ENCODE measurements at regions of chr3 and their contacts with region 1.

Region 1: GRCh38 chr3:150763122-150763841 is at the start of gene SIAH2:
- DNase-seq: peak; percentile 97
- H3K4me3 Mint-ChIP-seq: peak within 1 kb of the TSS; percentile 88
- H3K27ac Mint-ChIP-seq: peak within 1 kb of the TSS; percentile 97
- H3K4me1 Mint-ChIP-seq: peaks cover 46% of the 10 kb centered on the region
- H3K27me3 Mint-ChIP-seq: no peaks in the 10 kb centered on the region
- CTCF ChIP-seq: no peak
- total RNA-seq, gene SIAH2: 30.6 and 33.6 TPM in 2 replicates

Region 2: GRCh38 chr3:150359381-150359780 is 403.9 kb before region 1 on chr3:
- CTCF ChIA-PET with region 1: no interaction called
- intact Hi-C with region 1: no loop called
- DNase-seq: no peak
- H3K4me3 Mint-ChIP-seq: no peak overlapping the region
- H3K27ac Mint-ChIP-seq: no peak overlapping the region
- H3K4me1 Mint-ChIP-seq: peaks cover 18% of the 10 kb centered on the region
- H3K27me3 Mint-ChIP-seq: no peaks in the 10 kb centered on the region
- CTCF ChIP-seq: no peak

Region 3: GRCh38 chr3:150546226-150547044 is 216.8 kb before region 1 on chr3 and contains the starts of genes EIF2A and SERP1:
- CTCF ChIA-PET with region 1: no interaction called
- intact Hi-C with region 1: loop called (anchors 5 kb)
- DNase-seq: peak; percentile 100
- H3K4me3 Mint-ChIP-seq: peak within 1 kb of the TSS; percentile 93
- H3K27ac Mint-ChIP-seq: peak within 1 kb of the TSS; percentile 98
- H3K4me1 Mint-ChIP-seq: peaks cover 51% of the 10 kb centered on the region
- H3K27me3 Mint-ChIP-seq: no peaks in the 10 kb centered on the region
- CTCF ChIP-seq: no peak
- total RNA-seq, gene EIF2A: 142 and 167 TPM in 2 replicates
- total RNA-seq, gene SERP1: 147 and 152 TPM in 2 replicates

Region 4: GRCh38 chr3:150567328-150567727 is 196.0 kb before region 1 on chr3:
- CTCF ChIA-PET with region 1: no interaction called
- intact Hi-C with region 1: no loop called
- DNase-seq: no peak
- H3K4me3 Mint-ChIP-seq: no peak overlapping the region
- H3K27ac Mint-ChIP-seq: peak overlapping the region; percentile 31
- H3K4me1 Mint-ChIP-seq: no peaks in the 10 kb centered on the region
- H3K27me3 Mint-ChIP-seq: no peaks in the 10 kb centered on the region
- CTCF ChIP-seq: no peak

Region 5: DNA sequence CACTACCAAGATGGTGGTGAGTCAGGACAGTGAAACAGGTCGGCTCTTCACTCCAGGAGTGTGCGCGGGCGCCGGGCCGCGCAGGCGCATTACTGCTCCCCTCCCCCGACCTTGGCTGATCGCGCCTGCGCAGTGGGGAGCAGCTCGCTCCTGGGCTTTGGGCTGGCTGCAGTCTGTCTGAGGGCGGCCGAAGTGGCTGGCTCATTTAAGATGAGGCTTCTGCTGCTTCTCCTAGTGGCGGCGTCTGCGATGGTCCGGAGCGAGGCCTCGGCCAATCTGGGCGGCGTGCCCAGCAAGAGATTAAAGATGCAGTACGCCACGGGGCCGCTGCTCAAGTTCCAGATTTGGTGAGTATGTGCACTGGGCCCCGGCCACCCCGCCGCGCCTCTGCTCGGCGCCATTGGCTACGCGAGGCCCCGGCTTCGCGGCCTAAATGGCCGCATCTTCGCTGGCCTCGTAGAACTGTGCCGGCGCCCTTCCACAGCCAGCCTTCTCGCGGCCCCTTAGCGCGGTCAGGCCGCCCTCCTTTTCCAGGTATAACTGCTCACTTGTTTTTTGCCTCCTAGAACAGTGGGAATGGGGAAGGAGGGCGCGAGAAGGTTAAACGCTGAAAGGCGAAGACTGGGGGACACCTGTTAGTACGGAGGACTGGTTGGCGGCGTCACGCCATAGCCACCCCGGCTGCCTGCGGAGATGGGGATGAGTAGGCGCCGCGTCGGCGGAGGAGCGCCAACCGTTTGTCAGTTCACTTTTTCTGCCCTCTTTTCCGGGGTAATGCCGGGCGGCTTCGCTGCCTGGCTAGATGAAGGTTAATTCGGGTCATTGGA is 159.9 kb before region 1 on chr3 and contains the start of gene SELENOT:
- CTCF ChIA-PET with region 1: interaction called, 3 read pairs
- intact Hi-C with region 1: loop called (anchors 5 kb)
- DNase-seq: peak; percentile 98
- H3K4me3 Mint-ChIP-seq: peak within 1 kb of the TSS; percentile 97
- H3K27ac Mint-ChIP-seq: peak within 1 kb of the TSS; percentile 98
- H3K4me1 Mint-ChIP-seq: peaks cover 67% of the 10 kb centered on the region
- H3K27me3 Mint-ChIP-seq: no peaks in the 10 kb centered on the region
- CTCF ChIP-seq: peak; percentile 31
- total RNA-seq, gene SELENOT: 200 and 210 TPM in 2 replicates

Region 6: DNA sequence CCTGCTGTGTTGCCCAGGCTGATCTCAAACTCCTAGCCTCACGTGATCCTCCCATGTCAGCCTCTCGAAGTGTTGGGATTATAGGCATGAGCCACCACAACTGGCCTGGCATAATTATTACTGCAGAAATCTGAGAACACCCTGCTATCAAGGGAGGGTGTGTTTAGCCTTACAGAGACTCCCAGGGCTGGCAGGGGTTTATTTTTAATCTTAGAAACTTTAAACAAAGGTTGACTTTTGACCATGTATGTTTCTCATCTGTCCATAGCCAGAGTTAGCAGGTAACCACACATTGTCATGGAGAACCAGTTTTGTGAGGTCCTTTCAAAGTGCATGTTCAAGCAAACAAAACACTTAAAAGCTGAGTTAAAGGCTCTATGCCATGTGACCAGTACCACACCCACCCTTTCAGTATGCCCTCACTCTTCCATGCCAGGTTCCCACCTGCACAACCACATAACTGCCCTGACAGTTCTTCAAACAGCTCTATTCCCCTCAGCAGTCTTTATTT is 11.5 kb before region 1 on chr3:
- CTCF ChIA-PET with region 1: interaction called, 12 read pairs
- intact Hi-C with region 1: loop called (anchors 1 kb)
- DNase-seq: peak; percentile 63
- H3K4me3 Mint-ChIP-seq: peak overlapping the region; percentile 6
- H3K27ac Mint-ChIP-seq: peak overlapping the region; percentile 10
- H3K4me1 Mint-ChIP-seq: peaks cover 72% of the 10 kb centered on the region
- H3K27me3 Mint-ChIP-seq: no peaks in the 10 kb centered on the region
- CTCF ChIP-seq: no peak

Region 7: GRCh38 chr3:150787741-150788370 is 24.6 kb after region 1 on chr3:
- CTCF ChIA-PET with region 1: interaction called, 11 read pairs
- intact Hi-C with region 1: no loop called
- DNase-seq: peak; percentile 95
- H3K4me3 Mint-ChIP-seq: no peak overlapping the region
- H3K27ac Mint-ChIP-seq: no peak overlapping the region
- H3K4me1 Mint-ChIP-seq: no peaks in the 10 kb centered on the region
- H3K27me3 Mint-ChIP-seq: no peaks in the 10 kb centered on the region
- CTCF ChIP-seq: peak; percentile 98

Region 8: DNA sequence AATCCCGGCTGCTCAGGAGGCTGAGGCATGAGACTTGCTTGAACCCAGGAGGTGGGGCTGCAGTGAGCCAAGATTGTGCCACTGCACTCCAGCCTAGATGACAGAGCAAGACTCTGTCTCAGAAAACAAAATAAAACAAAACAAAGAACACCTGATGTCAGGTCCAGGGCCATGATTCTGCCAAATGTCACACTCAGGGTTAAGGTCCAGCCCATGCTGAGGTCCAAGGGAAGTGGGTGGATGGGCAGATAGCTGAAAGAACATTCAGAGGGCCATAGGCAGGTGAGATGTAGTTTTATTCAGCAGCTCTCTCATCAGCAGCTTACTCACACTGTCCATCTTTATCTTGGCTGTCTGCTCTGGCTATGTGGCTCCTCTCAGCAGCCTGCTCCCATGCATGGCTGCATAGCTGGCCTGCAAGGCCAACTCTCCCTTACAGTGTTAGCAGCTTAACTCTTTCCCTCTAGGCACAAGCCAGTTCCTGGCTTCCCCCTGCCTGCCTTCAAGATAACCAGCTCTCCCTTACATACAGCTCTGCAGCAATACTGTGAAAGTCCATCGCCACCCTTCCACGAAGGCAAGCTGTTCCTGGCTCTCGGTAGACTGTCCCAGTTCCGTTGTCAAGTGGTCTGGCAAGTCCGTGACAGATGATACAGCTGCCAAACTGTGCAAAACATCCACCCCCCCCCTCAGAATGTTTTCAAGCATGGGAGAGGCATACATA is 62.1 kb after region 1 on chr3:
- CTCF ChIA-PET with region 1: no interaction called
- intact Hi-C with region 1: no loop called
- DNase-seq: no peak
- H3K4me3 Mint-ChIP-seq: no peak overlapping the region
- H3K27ac Mint-ChIP-seq: no peak overlapping the region
- H3K4me1 Mint-ChIP-seq: no peaks in the 10 kb centered on the region
- H3K27me3 Mint-ChIP-seq: peaks cover 58% of the 10 kb centered on the region
- CTCF ChIP-seq: no peak

Measured in Calu3 (cell line).